Activated CD4-positive, alpha-beta memory T cell treated with anti-CD3 and anti-CD28 coated beads for 36 hours (primary cell): ENCODE measurements at regions of chr1 and their contacts with region 1.

Region 1: DNA sequence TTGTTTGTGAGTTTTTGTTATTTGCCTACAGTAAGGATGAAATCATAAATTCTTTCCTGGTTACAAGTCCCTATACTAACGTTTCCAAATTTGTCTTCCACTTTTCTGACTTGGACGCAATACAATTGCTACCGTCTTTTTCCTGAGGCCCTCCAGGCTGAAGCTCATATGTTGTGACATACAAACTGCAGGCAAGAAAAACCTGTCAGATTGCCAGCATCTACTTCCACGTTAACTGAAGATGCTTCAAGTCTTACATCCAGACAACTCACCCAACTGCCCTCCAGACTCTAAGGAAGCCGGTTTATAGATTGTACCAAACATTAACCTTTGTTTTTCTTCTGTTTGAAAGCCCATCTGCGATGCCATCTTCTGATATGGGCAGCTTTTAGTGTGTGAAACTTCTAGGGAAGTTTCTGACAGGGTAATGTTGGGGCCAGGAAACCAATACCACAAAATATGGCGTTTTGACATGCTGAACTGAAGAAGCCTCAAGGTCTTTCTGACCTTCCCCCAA is 21.4 kb upstream of the RNF11 start:
- DNase-seq: peak; percentile 22
- H3K4me3 Mint-ChIP-seq: no peak overlapping the region
- H3K27ac Mint-ChIP-seq: peak overlapping the region; percentile 23
- H3K4me1 Mint-ChIP-seq: peaks cover 21% of the 10 kb centered on the region
- H3K27me3 Mint-ChIP-seq: no peaks in the 10 kb centered on the region

Region 2: DNA sequence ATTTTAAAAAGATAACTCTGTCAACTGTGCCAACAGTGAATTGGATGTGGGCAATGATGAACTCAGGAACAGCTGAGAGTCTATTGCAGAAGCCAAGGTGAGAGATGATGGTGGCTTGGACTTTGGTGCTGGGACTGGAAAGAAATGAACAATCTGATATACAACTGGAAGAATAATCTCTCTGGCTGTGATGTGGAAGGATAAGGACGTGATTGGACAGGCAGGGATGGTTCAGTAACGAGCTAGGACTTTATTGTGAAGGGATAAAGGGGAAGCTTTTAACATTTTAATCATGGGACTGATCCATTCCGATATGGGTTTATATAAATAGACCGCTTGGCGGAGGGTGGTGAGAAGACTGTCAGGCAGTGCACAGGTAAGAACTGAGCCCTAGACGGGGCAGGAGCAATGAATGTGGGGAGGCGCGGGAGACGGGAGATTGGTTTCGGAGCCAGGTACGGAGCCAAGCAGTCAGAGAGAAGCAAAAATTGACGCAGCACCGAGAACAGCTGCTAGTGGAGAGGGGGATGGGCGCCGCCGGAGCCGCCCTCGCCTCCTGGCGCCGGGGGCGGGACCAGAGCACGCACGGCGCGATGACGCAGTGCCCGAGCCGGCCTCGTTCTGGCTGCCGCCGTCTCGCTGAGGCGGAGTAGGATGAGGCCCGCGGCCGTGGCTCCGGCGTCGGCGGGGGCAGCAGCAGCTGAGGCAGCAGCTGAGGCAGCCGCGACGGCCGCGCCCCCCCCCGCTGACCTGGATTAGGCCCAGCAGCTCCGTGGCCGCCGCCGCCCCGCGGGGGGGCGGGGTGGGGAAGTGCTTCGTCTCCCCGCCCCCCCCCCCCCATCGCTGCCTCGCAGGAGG is 21.2 kb after region 1 on chr1 and contains the start of gene RNF11:
- CTCF ChIA-PET with region 1: no interaction called
- POLR2A ChIA-PET with region 1: interaction called, 3 read pairs
- intact Hi-C with region 1: loop called (anchors 2 kb)
- DNase-seq: peak; percentile 94
- H3K4me3 Mint-ChIP-seq: peak within 1 kb of the TSS; percentile 89
- H3K27ac Mint-ChIP-seq: peak within 1 kb of the TSS; percentile 81
- H3K4me1 Mint-ChIP-seq: peaks cover 38% of the 10 kb centered on the region
- H3K27me3 Mint-ChIP-seq: no peaks in the 10 kb centered on the region
- total RNA-seq, gene RNF11: 26.3 to 31.9 TPM

Region 3: DNA sequence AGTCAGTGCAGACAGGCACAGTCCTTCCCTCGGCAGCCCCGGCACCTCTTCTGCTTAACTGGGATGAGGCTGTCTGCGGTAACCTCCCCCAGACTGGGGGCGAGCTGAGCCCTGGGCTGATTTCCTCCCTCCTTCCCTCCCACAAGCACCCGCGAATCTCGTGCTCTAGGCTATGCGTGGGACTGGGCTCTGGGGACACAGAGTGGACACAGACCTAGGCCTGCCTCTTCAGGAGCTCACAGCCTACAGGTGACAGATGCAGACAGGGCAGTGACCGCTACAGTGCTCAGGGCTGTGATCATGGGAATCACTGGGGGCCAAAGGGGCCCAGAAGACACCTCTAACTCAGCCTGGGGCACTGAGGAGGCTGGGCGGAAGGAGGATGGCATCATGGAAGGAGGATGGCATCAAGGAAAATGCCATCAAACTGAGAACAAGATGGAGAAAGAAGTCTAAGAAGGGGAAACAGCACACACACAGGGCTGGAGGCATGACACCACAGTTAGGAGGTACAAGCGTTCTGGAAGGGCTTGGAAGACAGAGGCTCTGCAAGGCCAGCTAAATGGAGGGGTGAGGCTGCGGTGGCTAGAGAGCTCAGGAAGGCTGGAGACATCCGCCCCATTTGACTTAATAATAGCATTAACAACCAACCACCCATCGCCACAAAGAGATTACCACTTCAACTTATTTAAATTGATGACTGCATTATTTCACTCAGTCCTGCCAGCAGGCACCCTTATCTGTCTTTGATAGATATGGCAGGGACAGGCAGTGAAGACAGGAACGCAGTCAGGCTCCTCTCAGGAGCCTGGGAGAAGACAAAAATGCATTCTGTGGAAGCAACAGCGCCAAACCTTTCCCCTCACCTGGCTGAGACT is 111.4 kb after region 1 on chr1:
- CTCF ChIA-PET with region 1: no interaction called
- POLR2A ChIA-PET with region 1: no interaction called
- intact Hi-C with region 1: no loop called
- DNase-seq: no peak
- H3K4me3 Mint-ChIP-seq: no peak overlapping the region
- H3K27ac Mint-ChIP-seq: no peak overlapping the region
- H3K4me1 Mint-ChIP-seq: peaks cover 10% of the 10 kb centered on the region
- H3K27me3 Mint-ChIP-seq: peaks cover 21% of the 10 kb centered on the region

Region 4: DNA sequence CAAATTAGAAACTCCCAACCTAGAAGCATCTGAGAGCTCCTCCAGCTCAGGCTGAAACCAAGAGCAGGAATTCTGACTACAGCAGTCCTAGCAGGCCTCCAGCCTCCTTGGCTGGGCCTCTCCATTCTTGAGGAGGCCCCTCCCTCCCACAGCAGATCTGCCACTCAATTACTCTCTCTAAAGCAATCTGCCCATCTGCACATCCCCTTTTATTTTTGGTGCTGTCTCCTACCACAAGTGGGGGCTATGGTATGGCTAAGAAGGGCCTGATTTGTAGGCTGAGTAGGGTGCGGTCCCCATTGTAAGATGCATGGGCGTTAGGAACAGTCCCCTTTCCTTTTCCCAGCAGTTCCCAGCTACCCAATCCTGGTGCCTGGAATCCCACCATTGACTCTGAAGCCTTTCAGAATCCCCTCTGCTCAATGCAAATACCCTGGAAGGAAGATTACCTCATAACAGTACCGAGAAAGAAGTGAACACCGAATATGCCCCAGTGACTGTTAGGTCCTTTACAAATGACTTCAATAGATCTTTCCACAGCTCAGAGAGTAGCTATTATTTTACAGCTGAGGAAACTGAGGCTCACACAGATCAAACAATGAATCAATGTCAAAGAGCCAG is 127.3 kb after region 1 on chr1:
- CTCF ChIA-PET with region 1: no interaction called
- POLR2A ChIA-PET with region 1: no interaction called
- intact Hi-C with region 1: no loop called
- DNase-seq: no peak
- H3K4me3 Mint-ChIP-seq: no peak overlapping the region
- H3K27ac Mint-ChIP-seq: no peak overlapping the region
- H3K4me1 Mint-ChIP-seq: no peaks in the 10 kb centered on the region
- H3K27me3 Mint-ChIP-seq: peaks cover 39% of the 10 kb centered on the region

Region 5: GRCh38 chr1:51612349-51612998 is 397.8 kb after region 1 on chr1:
- CTCF ChIA-PET with region 1: no interaction called
- POLR2A ChIA-PET with region 1: no interaction called
- intact Hi-C with region 1: no loop called
- DNase-seq: no peak
- H3K4me3 Mint-ChIP-seq: no peak overlapping the region
- H3K27ac Mint-ChIP-seq: no peak overlapping the region
- H3K4me1 Mint-ChIP-seq: peaks cover 7% of the 10 kb centered on the region
- H3K27me3 Mint-ChIP-seq: peaks cover 3% of the 10 kb centered on the region